ENCODE measurements at regions of chr14 and their contacts with region 1.

Region 1: GRCh38 chr14:50775357-50775756 is 55.6 kb downstream of the NIN start:
- DNase-seq: no peak
- ATAC-seq: peak; percentile 12

Region 2: DNA sequence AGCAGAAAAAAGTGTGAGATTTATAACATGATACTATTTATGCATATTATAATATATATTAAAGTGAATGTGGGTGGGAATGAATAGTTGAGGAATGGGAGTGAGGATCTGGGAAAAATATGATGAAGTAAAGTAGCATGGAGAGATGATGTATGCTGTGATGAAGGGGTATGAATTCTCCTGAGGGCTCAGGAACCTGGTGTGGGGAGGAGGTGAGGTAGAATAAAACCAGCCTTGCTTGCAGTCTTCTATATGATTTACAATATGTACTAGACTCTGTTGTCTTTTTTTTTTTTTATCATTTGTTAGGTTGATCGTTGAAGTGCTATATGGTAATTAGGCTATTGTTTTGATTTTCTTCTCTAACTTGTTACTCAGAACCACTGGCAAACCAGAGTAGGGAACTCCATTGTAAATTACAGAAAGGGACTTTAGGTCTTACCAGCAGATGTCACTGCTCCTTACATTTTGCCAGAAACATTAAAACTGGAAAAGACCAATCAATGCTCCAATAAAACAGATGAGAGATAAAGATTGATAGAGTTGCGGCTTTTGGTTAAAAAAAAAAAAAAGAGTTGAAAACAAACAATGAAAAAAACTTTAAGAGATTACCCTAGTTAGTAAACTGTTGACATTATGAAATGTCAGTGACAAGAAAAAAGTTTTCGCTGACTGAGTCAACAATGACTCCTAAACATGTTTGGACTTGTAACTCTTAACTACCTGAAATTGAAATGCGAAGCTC is 175.5 kb before region 1 on chr14:
- intact Hi-C with region 1: loop called (anchors 5 kb)
- DNase-seq: no peak
- ATAC-seq: peak; percentile 61

Region 3: GRCh38 chr14:50860478-50861086 is 85.2 kb after region 1 on chr14:
- intact Hi-C with region 1: loop called (anchors 5 kb)
- DNase-seq: peak; percentile 85
- ATAC-seq: peak; percentile 92

Region 4: GRCh38 chr14:51357250-51357649 is 581.9 kb after region 1 on chr14:
- intact Hi-C with region 1: no loop called
- DNase-seq: no peak
- ATAC-seq: no peak